Heart left ventricle (tissue), 16 donors: ENCODE measurements at regions of chr14 and their contacts with region 1.

Region 1: GRCh38 chr14:62546862-62547474 is 498.3 kb downstream of the KCNH5 start:
- DNase-seq: no peak
- ATAC-seq: no peak
- H3K4me3 ChIP-seq: no peak overlapping the region
- H3K27ac ChIP-seq: no peak overlapping the region
- H3K4me1 ChIP-seq: no peaks in the 10 kb centered on the region
- H3K27me3 ChIP-seq: no peaks in the 10 kb centered on the region
- CTCF ChIP-seq: no peak
- POLR2A ChIP-seq: no peak

Region 2: DNA sequence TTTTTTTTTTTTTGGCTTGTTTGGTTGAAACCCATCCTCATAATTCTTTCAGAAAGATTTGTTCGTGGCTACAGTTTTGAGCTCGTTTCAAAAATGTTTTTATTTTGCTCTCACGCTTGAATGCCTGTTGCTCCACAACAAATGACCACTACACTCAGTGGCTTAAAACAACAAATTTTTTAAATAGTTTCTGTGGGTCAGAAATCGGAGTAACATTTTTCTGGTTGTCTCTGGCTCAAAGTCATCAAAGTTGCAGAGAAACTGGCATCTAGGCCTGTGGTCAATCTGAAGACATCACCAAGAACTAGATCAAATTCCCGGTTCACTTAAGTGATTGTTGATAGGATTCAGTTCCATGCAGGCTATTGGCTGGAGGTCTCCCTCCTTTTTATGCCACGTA is 224.8 kb before region 1 on chr14:
- intact Hi-C with region 1: no loop called
- DNase-seq: no peak
- ATAC-seq: no peak
- H3K4me3 ChIP-seq: no peak overlapping the region
- H3K27ac ChIP-seq: no peak overlapping the region
- H3K4me1 ChIP-seq: no peaks in the 10 kb centered on the region
- H3K27me3 ChIP-seq: no peaks in the 10 kb centered on the region
- CTCF ChIP-seq: no peak
- POLR2A ChIP-seq: no peak

Region 3: GRCh38 chr14:62491146-62491545 is 55.8 kb before region 1 on chr14:
- intact Hi-C with region 1: no loop called
- DNase-seq: no peak
- ATAC-seq: no peak
- H3K4me3 ChIP-seq: no peak overlapping the region
- H3K27ac ChIP-seq: no peak overlapping the region
- H3K4me1 ChIP-seq: no peaks in the 10 kb centered on the region
- H3K27me3 ChIP-seq: no peaks in the 10 kb centered on the region
- CTCF ChIP-seq: no peak
- POLR2A ChIP-seq: no peak

Region 4: GRCh38 chr14:62585247-62585646 is 38.3 kb after region 1 on chr14:
- intact Hi-C with region 1: loop called in 1 of 10 experiments (anchors 2 kb)
- DNase-seq: no peak
- ATAC-seq: no peak
- H3K4me3 ChIP-seq: no peak overlapping the region
- H3K27ac ChIP-seq: no peak overlapping the region
- H3K4me1 ChIP-seq: no peaks in the 10 kb centered on the region
- H3K27me3 ChIP-seq: no peaks in the 10 kb centered on the region
- CTCF ChIP-seq: no peak
- POLR2A ChIP-seq: no peak

Region 5: DNA sequence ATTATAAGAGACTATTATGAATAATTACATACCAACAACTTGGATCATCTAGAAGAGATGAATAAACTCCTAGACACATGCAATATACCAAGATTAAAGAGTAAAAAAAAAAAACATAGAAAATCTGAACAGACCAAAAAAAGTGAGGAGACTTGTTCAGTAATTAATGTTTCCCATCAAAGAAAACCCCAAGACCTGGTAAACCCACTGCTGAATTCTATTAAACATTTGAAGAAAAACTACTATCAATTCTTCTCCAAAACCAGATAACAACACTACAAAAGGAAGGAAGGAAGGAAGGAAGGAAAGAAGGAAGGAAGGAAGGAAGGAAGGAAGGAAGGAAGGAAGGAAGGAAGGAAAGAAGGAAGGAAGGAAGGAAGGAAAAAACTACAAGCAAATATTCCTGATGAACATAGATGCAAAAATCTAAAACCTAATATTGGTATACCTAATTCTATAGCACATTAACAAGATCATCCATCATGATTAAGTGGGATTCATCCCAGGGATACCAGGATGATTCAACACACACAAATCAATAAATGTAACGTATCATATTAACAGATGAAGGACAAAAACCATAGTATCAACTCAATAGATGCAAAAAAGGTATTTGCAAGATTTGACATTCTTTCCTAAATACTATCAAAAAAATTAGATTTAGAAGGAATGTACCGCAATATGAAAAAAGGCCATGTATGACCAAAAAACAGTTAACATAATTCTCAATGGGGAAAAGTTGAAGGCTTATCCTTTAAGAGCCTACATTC is 52.8 kb after region 1 on chr14:
- intact Hi-C with region 1: no loop called
- DNase-seq: no peak
- ATAC-seq: no peak
- H3K4me3 ChIP-seq: no peak overlapping the region
- H3K27ac ChIP-seq: no peak overlapping the region
- H3K4me1 ChIP-seq: no peaks in the 10 kb centered on the region
- H3K27me3 ChIP-seq: no peaks in the 10 kb centered on the region
- CTCF ChIP-seq: no peak
- POLR2A ChIP-seq: no peak